PC-9 (cell line): ENCODE measurements at regions of chr17 and their contacts with region 1.

Region 1: GRCh38 chr17:64420143-64420971 is 28.6 kb upstream of the MILR1 start:
- DNase-seq: peak; percentile 37 to 60
- H3K4me3 ChIP-seq: no peak overlapping the region
- H3K27ac ChIP-seq: peak overlapping the region; percentile 29; the same call in 1 of the 2 replicates
- H3K4me1 ChIP-seq: peaks cover 22% of the 10 kb centered on the region
- H3K27me3 ChIP-seq: no peaks in the 10 kb centered on the region
- CTCF ChIP-seq: peak; percentile 81

Region 2: GRCh38 chr17:64145757-64146417 is 274.5 kb before region 1 on chr17:
- CTCF ChIA-PET with region 1: no interaction called
- POLR2A ChIA-PET with region 1: no interaction called
- intact Hi-C with region 1: loop called (anchors 10 kb)
- DNase-seq: peak; percentile 93 to 98
- H3K4me3 ChIP-seq: peak overlapping the region; percentile 93
- H3K27ac ChIP-seq: peak overlapping the region; percentile 90
- H3K4me1 ChIP-seq: peaks cover 31% of the 10 kb centered on the region
- H3K27me3 ChIP-seq: no peaks in the 10 kb centered on the region
- CTCF ChIP-seq: no peak

Region 3: DNA sequence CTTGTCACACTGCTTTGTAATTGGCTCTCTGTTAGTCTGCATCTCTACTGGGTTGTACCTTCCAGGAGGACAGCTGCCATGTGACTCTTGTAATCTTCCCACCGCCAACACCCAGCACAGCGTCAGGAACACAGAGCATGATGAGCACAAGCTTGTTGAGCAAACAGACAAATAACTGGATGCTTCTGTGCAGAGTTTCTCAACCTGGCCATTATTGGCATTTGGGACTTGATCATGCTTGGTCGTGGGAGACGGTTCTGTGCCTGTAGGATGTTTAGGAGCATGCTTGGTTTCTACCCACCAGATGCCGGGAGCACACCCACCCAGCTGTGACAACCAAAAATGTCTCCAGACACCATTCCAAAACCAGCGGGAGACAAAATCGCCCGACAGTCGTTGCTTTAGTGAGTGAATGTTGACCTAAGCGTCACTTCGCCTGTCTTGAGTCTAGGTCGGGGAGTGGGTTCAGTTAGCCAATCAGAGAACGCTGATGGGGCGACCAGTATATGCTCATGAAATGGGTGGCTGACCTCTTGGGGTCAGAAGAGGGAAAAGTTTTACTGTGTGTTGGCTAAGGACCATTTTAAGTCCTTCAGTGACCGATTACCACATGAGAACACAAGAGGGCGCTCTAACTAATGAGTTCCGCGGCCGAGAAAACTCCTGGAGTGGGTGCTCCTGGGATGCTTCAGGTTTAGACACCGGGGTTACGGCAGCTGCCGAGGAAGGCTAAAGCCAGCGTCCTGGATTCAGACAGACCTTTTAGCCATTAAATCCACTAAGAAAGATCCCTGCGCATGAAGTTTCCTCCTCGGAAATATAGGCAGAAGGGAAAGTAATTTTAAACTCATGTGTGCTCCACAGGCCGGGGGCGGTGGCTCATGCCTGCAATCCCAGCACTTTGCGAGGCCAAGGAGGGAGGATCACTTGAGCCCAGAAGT is 99.5 kb before region 1 on chr17:
- CTCF ChIA-PET with region 1: interaction called, 13 read pairs
- POLR2A ChIA-PET with region 1: no interaction called
- intact Hi-C with region 1: loop called (anchors 1 kb)
- DNase-seq: peak; percentile 61 to 72
- H3K4me3 ChIP-seq: no peak overlapping the region
- H3K27ac ChIP-seq: no peak overlapping the region
- H3K4me1 ChIP-seq: peaks cover 48% of the 10 kb centered on the region
- H3K27me3 ChIP-seq: no peaks in the 10 kb centered on the region
- CTCF ChIP-seq: peak; percentile 96

Region 4: DNA sequence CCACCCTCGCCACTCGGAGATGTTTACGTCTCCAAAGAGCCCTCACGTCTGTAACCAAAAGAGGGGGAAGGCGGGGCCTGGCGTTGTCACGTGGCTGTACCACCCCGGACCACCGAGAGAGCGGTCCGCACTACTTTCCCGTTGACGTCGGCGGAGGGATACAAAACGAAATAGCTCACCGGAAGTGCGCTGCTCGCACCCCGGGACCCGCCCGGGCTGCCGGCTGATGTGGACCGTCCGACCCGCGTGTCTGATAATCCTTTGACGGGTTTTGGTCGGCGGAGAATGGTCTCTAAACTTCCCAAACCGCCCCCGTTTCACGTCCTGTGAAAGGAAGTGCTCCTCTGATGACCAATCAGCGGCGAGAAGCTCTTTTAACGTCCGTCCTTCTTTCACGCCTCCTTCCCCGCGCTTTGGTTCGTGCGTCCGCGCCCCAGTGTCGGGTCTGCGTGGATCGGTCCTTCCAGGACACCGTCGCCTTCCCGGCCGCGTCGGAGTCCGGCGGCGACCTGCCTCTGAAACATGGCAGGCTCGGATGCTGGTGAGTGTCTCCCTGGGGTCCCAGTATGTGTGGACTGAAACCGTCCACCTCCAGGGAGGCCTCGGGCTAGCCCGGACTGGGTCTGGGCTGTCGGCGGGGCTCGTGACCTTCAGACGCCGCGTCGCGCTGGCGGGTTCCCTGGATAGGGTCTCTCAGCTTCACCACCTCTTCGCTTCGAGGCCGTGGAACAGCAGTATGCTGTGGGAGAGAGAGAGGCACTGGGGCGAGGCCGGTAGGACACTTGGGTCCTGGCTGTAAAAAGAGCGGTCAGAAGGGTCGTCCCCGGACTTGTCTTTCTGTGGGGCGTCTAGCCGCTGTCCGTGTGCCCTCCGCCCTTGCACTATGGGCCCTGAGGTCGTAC is 86.5 kb after region 1 on chr17 and contains the start of gene CEP95:
- CTCF ChIA-PET with region 1: interaction called, 4 read pairs
- POLR2A ChIA-PET with region 1: interaction called, 17 read pairs
- intact Hi-C with region 1: no loop called
- DNase-seq: peak in 1 of 2 experiments; percentile 80
- H3K4me3 ChIP-seq: peak within 1 kb of the TSS; percentile 100
- H3K27ac ChIP-seq: peak within 1 kb of the TSS; percentile 98
- H3K4me1 ChIP-seq: peaks cover 30% of the 10 kb centered on the region
- H3K27me3 ChIP-seq: no peaks in the 10 kb centered on the region
- CTCF ChIP-seq: no peak
- total RNA-seq, gene CEP95: 56.0 and 57.2 TPM in 2 replicates

Region 5: DNA sequence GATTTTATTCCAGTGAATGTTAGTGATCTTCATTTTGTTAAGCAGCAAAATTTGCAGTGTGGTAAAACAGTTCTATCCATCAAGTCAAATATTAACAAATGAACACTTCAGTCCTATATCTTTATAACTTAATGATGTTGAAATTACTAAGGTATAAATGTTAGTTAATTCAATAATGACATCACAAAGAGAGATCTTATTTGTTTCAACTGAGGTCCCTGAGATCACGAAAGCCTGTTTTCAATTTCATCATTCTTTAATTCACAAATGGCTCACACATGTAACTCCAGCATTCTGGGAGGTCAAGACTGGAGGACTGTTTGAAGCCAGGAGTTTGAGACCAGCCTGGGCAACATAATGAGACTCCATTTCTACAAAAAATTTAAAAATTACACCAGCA is 227.9 kb after region 1 on chr17:
- CTCF ChIA-PET with region 1: no interaction called
- POLR2A ChIA-PET with region 1: no interaction called
- intact Hi-C with region 1: loop called (anchors 5 kb)
- DNase-seq: no peak
- H3K4me3 ChIP-seq: no peak overlapping the region
- H3K27ac ChIP-seq: 0 out of 2 replicates have a peak overlapping the region, but pooled peaks have one; percentile 12
- H3K4me1 ChIP-seq: peaks cover 28% of the 10 kb centered on the region
- H3K27me3 ChIP-seq: no peaks in the 10 kb centered on the region
- CTCF ChIP-seq: no peak